BJ (cell line): ENCODE measurements at regions of chr7 and their contacts with region 1.

Region 1: DNA sequence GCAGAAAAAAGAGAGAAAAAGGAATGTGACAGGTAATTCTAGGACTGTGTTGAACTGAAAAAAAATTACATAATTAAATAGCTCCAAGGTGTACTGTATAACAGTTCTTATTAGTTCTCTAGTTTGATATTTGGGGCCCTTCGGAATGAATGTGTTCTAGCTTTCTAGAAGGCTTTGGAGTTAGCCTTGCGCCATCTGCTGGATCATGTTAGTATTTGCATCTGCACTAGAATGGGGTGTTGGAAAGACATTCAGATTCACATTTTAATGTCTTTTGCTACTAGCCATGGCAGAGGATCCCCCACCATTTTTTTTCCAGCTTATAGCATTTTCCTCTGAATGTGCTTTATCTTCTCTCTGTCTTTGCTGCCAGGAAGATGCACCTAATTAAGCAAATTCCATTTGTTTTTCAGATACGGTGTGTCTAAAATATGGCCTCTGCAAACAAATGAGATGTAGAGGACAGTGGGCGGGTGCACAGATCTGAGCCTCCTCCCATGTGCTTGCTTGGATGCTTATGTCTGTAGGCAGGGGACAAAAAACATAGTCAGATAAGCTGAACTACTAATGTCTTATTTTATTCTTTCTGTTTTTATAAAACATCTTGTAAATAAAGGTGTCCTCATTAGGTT is 238.5 kb downstream of the PHF14 start:
- DNase-seq: no peak
- H3K4me3 ChIP-seq: no peak overlapping the region
- H3K27me3 ChIP-seq: peaks cover 3% of the 10 kb centered on the region; the same call in 1 of the 2 replicates
- CTCF ChIP-seq: peak; percentile 85

Region 2: GRCh38 chr7:11224535-11224934 is 12.3 kb after region 1 on chr7:
- CTCF ChIA-PET with region 1: interaction called, 10 read pairs
- POLR2A ChIA-PET with region 1: no interaction called
- DNase-seq: no peak
- H3K4me3 ChIP-seq: no peak overlapping the region
- H3K27me3 ChIP-seq: no peaks in the 10 kb centered on the region
- CTCF ChIP-seq: no peak